RWPE1 (cell line): ENCODE measurements at regions of chr3 and their contacts with region 1.

Region 1: GRCh38 chr3:52184691-52185090 is 13.3 kb upstream of the ALAS1 start:
- DNase-seq: no peak
- H3K27ac ChIP-seq: no peak overlapping the region
- CTCF ChIP-seq: no peak

Region 2: GRCh38 chr3:52331091-52331490 is 146.4 kb after region 1 on chr3:
- CTCF ChIA-PET with region 1: interaction called, 11 read pairs
- POLR2A ChIA-PET with region 1: no interaction called
- DNase-seq: no peak
- H3K27ac ChIP-seq: no peak overlapping the region
- CTCF ChIP-seq: no peak

Region 3: DNA sequence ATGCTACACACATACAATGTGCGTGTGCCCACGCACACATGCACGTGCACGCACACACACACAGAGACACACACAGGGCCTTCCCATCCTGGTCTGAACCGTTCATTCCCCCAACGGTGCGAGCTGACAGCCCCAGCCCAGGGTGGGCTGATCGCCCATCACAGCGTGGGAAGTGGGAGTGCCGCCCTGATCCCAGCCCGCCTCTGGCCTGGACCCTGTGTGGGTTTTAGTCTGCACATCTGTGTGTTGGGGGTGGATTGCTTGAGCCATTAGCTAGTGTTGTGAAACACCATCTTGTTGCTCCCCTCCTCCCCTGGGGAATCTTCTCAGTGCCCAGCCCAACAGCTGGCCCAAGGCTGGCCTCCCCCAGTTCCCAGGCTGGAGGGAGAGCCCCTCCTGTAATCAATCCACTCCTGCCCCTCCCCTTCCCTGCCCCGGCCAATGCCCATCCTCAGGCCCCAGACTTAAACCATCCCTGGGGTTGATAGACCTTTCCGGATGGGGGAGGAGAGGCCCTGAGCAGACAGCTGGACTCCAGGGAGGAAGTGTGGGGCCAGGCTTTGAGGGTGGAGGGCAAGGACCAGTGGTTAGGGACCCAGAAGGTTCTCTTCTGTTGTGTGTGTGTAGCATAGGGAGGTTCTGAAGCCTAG is 251.9 kb after region 1 on chr3:
- CTCF ChIA-PET with region 1: no interaction called
- POLR2A ChIA-PET with region 1: no interaction called
- DNase-seq: no peak
- H3K27ac ChIP-seq: no peak overlapping the region
- CTCF ChIP-seq: no peak